ENCODE measurements at regions of chr2 and their contacts with region 1.

Region 1: GRCh38 chr2:189276277-189276676 is 96.7 kb upstream of the COL5A2 start:
- DNase-seq: no peak

Region 2: GRCh38 chr2:189208254-189208653 is 68.0 kb before region 1 on chr2:
- in situ Hi-C with region 1: loop called (anchors 5 kb)
- DNase-seq: no peak